Activated CD8-positive, alpha-beta T cell treated with anti-CD3 and anti-CD28 coated beads for 36 hours (primary cell): ENCODE measurements at regions of chr11 and their contacts with region 1.

Region 1: DNA sequence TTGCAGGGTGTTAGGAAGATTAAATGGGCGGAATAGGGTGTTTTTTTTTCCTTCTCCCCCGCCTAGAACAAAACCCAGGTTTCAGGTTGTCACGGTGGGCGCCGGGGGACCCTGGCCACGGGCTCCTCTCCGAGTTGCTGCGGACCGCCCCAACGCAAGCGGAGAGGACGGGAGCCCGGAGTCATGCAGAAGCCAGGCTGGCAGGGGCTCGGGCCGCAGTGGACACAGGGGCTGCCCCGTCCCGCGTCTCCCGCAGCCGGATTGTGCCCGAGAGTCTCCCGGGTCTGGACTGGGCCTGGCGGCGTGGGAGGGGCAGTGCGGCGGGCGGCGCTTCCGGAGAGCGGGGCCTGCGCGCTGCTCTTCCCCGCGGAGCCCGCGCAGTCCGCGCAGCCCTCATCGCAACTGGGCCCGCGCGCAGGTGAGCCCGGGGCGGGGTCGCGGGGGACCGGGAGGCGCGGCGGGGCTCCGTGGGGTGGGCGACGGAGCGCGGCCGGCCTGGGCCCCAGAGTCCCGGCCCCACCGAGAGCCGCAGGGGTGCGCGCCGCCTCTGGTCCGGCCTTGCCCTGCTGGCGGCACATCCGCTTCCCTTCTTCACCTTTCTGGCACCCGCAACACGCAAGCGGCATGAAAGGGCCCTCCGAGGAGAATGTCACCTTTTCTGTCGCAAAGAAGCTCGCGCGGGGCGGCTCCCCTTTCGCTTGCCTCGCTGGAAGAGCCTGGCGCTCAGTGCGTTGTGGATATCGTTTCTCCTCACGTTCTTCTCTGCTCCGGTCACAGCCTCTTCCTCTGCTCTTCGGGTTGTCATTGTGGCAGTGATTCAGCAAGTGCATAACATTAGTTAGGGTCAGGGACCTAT is at the start of gene TIRAP:
- DNase-seq: peak; percentile 73
- ATAC-seq: peak; percentile 63
- H3K4me3 Mint-ChIP-seq: peak within 1 kb of the TSS; percentile 99
- H3K27ac Mint-ChIP-seq: peak within 1 kb of the TSS; percentile 91
- H3K4me1 Mint-ChIP-seq: peaks cover 46% of the 10 kb centered on the region
- H3K27me3 Mint-ChIP-seq: no peaks in the 10 kb centered on the region
- CTCF ChIP-seq: no peak
- total RNA-seq, gene TIRAP: 4.6 to 4.9 TPM

Region 2: GRCh38 chr11:126268708-126269579 is 14.0 kb before region 1 on chr11 and contains the starts of genes FOXRED1 and SRPRA:
- CTCF ChIA-PET with region 1: no interaction called
- POLR2A ChIA-PET with region 1: interaction called, 25 read pairs
- intact Hi-C with region 1: no loop called
- DNase-seq: peak; percentile 100
- ATAC-seq: peak; percentile 100
- H3K4me3 Mint-ChIP-seq: peak within 1 kb of the TSS; percentile 96
- H3K27ac Mint-ChIP-seq: peak within 1 kb of the TSS; percentile 97
- H3K4me1 Mint-ChIP-seq: peaks cover 38% of the 10 kb centered on the region
- H3K27me3 Mint-ChIP-seq: no peaks in the 10 kb centered on the region
- CTCF ChIP-seq: no peak
- total RNA-seq, gene FOXRED1: 46.0 to 47.3 TPM
- total RNA-seq, gene SRPRA: 127 to 128 TPM